ENCODE measurements at regions of chr10 and their contacts with region 1.

Region 1: DNA sequence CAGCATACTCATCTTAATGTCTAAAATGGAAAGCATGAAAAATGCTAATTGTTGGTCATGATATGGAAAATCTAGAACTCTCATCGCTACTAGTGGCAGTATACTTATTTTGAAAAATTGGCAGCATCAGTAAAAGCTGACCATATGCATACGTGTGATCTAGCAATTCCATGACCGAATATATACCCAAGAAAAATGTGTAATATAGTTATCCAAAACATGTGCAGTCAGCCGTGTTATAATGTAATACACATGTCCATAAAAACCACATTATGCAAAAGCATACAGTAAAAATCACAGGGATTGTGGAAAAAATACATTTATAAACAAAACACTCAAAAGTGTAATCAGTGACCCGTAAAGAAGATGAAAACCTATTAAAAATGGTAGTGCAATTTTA is 439.0 kb downstream of the SH2D4B start:
- DNase-seq: no peak

Region 2: GRCh38 chr10:79381804-79382221 is 1594.8 kb before region 1 on chr10:
- intact Hi-C with region 1: no loop called
- DNase-seq: peak; percentile 94

Region 3: DNA sequence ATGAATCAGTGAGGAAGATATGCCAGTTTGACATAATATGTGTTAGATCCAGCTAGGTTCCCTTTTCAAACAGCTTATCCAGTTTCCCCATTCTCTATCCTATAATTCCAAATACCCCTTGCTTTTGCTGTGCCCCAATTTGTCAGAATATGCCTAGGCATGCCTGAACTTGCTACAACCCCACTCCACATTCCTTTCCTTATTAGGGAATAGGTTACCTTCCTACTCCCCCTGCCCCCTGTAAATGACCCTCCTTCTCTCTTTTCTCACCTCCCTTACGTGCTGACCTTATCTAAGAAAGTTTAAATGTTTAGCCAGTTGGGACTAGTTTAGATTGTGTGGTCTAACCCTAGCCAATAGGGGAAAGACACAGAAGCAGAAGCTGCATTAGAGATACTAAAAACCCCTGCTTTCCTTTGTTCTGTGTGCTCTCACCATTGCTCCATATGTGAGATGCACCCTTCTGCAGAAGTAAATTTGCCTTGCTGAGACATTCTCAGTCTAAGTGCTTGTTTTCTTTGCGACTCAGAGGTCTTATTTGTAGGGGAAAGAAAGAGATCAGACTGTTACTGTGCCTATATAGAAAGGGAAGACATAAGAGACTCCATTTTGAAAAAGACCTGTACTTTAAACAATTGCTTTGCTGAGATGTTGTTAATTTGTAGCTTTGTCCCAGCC is 171.2 kb before region 1 on chr10:
- intact Hi-C with region 1: no loop called
- DNase-seq: no peak

Region 4: DNA sequence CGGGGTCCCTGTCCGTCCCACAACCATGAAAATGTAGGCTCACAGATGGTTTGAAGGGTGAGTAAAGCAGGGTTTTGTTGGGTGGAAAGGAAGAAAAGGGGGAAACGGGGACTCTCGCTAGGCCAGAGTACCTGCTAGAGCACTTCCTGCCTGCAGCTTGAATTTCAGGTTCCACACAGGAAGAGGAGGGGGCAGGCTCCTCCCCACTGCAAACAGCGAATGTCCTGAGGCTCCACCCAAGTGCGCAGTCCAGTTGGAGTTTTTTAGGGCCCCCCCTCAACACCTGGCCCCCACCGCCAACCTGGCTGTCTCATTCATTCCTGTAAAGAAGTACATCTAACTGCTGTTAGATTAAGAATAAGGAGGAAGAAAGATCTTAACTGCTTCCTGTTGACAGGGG is 24.2 kb before region 1 on chr10:
- intact Hi-C with region 1: loop called in 1 of 2 experiments (anchors 2 kb)
- DNase-seq: no peak

Region 5: DNA sequence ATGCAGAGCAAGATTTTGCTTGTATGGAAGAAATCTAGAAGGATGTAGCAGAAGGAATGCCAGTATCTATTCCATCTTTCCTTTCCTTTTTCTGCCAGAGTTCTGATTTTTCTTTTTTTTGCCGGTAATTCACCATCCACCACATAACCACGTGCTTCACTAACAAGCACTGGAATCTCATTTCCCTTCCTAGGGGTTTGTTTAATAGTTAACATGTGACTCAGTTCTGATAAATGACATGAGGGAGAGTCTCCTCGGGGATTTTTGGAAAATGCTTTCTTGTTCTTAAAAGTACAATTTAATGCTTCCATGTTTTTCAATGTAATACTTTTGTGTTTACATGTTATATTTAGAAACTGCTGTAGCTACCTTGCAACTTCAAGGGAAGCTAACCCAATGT is 151.3 kb after region 1 on chr10:
- intact Hi-C with region 1: no loop called
- DNase-seq: no peak

Measured in posterior vena cava (tissue), 2 donors.